Sigmoid colon (tissue), 7 donors: ENCODE measurements at regions of chr13 and their contacts with region 1.

Region 1: GRCh38 chr13:42039946-42040729 is 8.3 kb upstream of the DGKH start:
- DNase-seq: peak; percentile 97
- H3K4me3 ChIP-seq: peak overlapping the region; percentile 71 to 89 (median 86)
- H3K27ac ChIP-seq: peak overlapping the region; percentile 95 to 99 (median 99)
- H3K4me1 ChIP-seq: peaks cover 0 to 19% (median 12%) of the 10 kb centered on the region in 4 donors
- H3K27me3 ChIP-seq: no peaks in the 10 kb centered on the region
- CTCF ChIP-seq: no peak
- EP300 ChIP-seq: no peak
- POLR2A ChIP-seq: peak; percentile 18 to 28

Region 2: GRCh38 chr13:41668130-41668757 is 371.9 kb before region 1 on chr13:
- intact Hi-C with region 1: loop called (anchors 5 kb)
- DNase-seq: peak; percentile 83
- H3K4me3 ChIP-seq: no peak overlapping the region
- H3K27ac ChIP-seq: peak overlapping the region in 3 of 4 donors; percentile 4 to 41 (median 24)
- H3K4me1 ChIP-seq: peaks cover 0 to 24% (median 5%) of the 10 kb centered on the region in 4 donors
- H3K27me3 ChIP-seq: no peaks in the 10 kb centered on the region
- CTCF ChIP-seq: peak; percentile 59 to 90 (median 82)
- EP300 ChIP-seq: no peak
- POLR2A ChIP-seq: no peak

Region 3: DNA sequence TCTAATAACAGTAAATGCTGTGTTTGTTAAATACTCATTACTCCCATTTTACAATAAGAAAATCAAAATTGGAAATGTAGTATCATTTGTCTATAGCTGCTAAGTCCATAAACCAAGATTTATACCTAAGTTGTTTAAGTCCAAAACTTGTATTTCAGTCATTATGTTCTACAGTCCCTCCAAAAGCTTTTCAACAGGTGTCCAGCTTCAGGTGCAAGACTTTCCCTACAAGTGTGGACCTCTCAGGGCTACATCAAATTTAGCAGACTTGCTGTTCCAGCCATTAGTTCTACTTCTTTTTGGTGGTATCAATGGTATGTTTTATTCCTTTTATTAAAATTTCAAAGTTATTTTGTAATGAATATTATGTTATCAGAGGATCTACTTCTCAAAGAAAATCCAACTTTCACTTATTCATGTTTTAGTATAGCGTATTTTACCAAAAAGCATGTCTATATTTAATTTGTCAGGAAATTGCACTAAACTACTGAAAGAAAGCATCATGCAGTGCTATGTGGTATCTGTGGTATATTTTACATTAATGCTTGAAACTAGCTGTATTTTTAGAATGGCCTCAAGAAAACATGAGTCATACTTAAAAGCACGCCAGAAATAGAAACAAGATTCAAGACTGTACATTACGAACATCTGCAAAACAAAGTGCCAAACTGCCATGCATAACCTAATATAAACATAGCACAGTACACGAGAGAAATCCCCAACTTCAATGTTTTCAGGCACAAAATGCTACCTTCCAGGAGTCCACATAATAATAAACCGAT is 123.8 kb before region 1 on chr13:
- intact Hi-C with region 1: loop called (anchors 5 kb)
- DNase-seq: no peak
- H3K4me3 ChIP-seq: peak overlapping the region in 1 of 4 donors; percentile 7
- H3K27ac ChIP-seq: peak overlapping the region in 2 of 4 donors; percentile 29 to 68
- H3K4me1 ChIP-seq: peaks cover 0 to 42% (median 26%) of the 10 kb centered on the region in 4 donors
- H3K27me3 ChIP-seq: no peaks in the 10 kb centered on the region
- CTCF ChIP-seq: no peak
- EP300 ChIP-seq: no peak
- POLR2A ChIP-seq: no peak

Region 4: DNA sequence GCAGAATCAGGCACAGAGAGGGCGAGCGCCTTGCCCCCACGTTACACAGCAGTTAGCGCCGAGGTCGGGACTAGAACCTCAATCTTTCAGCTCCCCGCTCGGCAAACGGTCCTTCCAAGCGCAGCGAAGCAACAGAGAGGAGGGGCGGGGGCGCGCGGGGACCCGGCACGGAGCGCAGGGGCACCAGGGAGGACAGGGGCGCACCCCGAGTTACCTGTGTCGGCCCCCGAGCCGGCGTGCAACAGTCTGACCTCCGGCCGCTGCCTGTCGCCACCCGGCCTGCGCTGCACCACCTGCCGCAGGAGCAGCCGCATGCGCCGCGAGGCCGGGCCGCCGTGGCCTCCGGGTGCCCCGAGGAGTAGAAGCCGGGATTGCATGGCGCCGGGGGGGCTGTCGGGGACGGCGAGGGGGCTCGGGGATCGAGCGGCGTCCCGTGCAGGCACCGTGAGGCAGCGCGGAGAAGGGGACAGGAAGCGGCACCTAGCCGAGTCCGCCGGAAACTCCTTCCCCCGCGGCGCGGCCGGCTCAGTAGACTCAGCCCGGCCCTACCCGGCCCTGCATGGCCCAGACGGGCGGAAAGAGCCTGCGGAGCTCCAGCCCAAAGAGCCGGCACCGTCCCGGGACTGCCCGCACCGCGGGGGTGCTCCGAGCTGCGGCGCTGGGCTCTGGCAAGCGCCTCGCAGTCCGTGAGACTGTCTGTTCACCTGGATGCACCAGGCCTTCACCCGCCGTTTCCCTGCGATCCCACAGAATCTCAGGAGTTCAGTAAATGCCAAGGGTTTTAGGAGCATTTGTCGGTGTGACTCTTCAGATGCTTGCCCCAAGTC is 79.3 kb before region 1 on chr13 and contains the start of gene VWA8:
- intact Hi-C with region 1: loop called (anchors 2 kb)
- DNase-seq: peak; percentile 88
- H3K4me3 ChIP-seq: peak within 1 kb of the TSS; percentile 73 to 87 (median 84)
- H3K27ac ChIP-seq: peak within 1 kb of the TSS; percentile 84 to 88 (median 86)
- H3K4me1 ChIP-seq: peaks cover 0 to 24% (median 13%) of the 10 kb centered on the region in 4 donors
- H3K27me3 ChIP-seq: no peaks in the 10 kb centered on the region
- CTCF ChIP-seq: no peak
- EP300 ChIP-seq: no peak
- POLR2A ChIP-seq: no peak
- total RNA-seq, gene VWA8: 24.7 to 37.5 (median 27.5) TPM

Region 5: DNA sequence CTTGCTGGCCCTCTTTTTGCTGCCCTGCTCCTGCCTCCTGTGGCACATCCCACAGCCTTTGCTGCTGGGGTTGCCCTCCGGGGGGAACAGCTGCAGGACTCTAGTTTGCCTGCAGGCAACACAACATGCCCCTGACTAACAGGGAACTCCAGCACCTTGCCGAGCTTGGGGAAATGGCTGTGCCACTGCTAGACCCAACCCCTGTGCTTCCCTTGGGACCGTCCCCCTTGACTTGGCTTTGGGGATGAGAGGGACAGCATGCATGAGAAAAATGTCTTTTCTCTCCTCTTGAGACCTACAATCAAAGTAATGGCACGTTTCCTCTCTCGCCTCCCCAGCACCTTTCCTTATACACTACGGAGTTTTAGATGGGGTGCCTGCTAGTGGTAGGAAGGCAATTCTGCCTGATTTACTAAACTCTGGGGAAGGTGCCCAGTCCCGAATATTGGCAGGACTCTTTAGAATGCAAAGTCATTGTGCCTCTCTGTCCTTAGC is 66.8 kb before region 1 on chr13:
- intact Hi-C with region 1: no loop called
- DNase-seq: no peak
- H3K4me3 ChIP-seq: no peak overlapping the region
- H3K27ac ChIP-seq: no peak overlapping the region
- H3K4me1 ChIP-seq: no peaks in the 10 kb centered on the region
- H3K27me3 ChIP-seq: no peaks in the 10 kb centered on the region
- CTCF ChIP-seq: no peak
- EP300 ChIP-seq: no peak
- POLR2A ChIP-seq: no peak